Natural killer cell (primary cell): ENCODE measurements at regions of chr19 and their contacts with region 1.

Region 1: DNA sequence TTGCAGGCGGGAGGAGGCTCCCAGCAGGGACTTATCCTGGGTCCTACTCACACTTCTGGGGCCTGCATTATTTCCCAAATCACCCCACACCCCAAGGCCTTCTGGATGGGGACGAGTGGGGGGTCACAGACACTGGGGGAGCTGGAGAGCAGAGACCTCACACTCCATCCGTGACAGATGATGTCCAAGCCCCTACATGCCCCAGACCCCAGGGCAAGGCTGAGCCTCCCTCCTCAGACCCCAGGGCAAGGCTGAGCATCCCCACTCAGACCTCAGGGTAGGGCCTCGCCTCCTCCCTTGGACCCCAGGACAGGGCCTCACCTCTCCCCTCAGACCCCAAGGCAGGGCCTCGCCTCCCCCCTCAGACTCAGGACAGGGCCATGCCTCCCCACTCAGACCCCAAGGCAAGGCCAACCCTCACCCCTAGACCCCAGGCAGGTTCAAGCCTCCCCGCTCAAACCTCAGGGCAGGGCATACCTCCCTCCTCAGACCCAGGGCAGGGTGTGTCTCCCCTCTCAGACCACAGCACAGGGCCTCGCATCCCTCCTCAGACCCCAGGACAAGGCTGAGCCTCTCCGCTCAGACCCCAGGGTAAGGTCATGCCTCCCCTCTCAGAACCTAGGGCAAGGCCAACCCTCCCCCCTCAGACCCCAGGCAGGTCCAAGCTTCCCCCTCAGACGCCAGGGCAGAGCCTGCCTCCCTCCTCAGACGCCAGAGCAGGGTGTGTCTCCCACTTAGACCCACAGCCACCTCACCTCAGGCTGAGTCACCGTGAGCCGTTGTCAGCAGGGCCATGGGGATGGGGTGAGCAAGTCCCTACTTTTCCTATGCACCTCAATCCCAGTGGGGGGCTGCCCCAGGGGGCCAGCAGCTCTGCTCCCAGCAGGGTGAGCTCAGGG is 1.7 kb upstream of the S1PR4 start:
- DNase-seq: peak; percentile 67 to 81
- ATAC-seq: peak; percentile 61 to 78 (median 68)
- H3K4me3 ChIP-seq: peak overlapping the region; percentile 11
- H3K4me3 Mint-ChIP-seq: peak overlapping the region; percentile 78
- H3K27ac ChIP-seq: peak overlapping the region; percentile 88
- H3K27ac Mint-ChIP-seq: peak overlapping the region; percentile 72 to 98
- H3K4me1 ChIP-seq: peaks cover 48% of the 10 kb centered on the region
- H3K4me1 Mint-ChIP-seq: peaks cover 27 to 40% of the 10 kb centered on the region in 2 donors
- H3K27me3 ChIP-seq: no peaks in the 10 kb centered on the region
- H3K27me3 Mint-ChIP-seq: no peaks in the 10 kb centered on the region
- CTCF ChIP-seq: no peak

Region 2: DNA sequence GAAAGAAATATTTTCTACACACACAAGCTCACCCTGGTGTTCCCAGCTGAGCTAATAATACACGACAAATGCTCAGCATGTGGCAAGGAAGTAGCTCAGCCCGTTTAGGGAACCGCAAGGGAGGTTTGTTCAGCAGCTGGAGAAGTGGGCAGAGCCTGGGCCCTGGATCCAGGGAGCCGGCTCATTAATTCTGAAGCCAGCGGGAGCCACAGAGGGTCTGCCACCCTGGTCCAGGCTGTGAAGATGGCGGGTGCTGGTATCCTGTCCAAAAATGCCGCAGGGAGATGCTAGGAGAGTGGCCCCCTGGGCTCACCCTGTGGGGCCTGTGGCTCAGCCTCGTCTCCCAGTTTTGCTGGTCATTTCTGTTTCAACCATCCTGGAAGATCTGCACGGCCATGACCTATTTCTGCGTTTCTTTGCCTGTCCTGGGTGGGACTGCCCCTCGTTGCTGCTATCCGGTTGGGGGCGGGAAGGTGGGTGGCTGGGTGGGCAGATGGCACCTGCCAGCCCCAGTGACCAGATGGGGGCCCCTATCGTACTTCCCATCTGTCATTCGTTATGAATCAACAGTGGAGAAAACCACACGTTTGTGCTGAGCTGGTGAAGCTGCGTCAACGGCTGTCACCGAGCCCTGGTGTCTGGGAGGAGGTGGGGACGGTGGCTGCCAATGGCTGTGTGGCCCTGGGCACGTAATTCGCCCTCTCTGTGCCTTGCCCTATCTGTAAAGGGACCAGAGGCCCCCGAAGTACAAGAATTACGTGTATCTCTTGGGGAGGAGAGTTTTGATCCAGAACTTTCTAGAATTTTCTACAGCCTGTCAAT is 43.7 kb before region 1 on chr19:
- intact Hi-C with region 1: loop called (anchors 5 kb)
- DNase-seq: peak; percentile 72 to 88
- ATAC-seq: peak; percentile 92 to 95 (median 93)
- H3K4me3 ChIP-seq: no peak overlapping the region
- H3K4me3 Mint-ChIP-seq: peak overlapping the region; percentile 74
- H3K27ac ChIP-seq: peak overlapping the region; percentile 80
- H3K27ac Mint-ChIP-seq: peak overlapping the region; percentile 82 to 92
- H3K4me1 ChIP-seq: peaks cover 30% of the 10 kb centered on the region
- H3K4me1 Mint-ChIP-seq: peaks cover 12 to 16% of the 10 kb centered on the region in 2 donors
- H3K27me3 ChIP-seq: peaks cover 2% of the 10 kb centered on the region
- H3K27me3 Mint-ChIP-seq: peaks cover 5 to 8% of the 10 kb centered on the region in 2 donors
- CTCF ChIP-seq: no peak